CD8-positive, alpha-beta memory T cell (primary cell): ENCODE measurements at regions of chr16 and their contacts with region 1.

Region 1: GRCh38 chr16:23877107-23878090 is 41.6 kb downstream of the PRKCB start:
- DNase-seq: peak in 1 of 5 donors; percentile 28
- H3K4me3 ChIP-seq: no peak overlapping the region
- H3K4me3 Mint-ChIP-seq: peak overlapping the region in 1 of 7 donors; percentile 40
- H3K27ac ChIP-seq: no peak overlapping the region
- H3K27ac Mint-ChIP-seq: peak overlapping the region in 7 of 8 donors; percentile 50 to 80 (median 73)
- H3K4me1 ChIP-seq: peaks cover 54% of the 10 kb centered on the region
- H3K4me1 Mint-ChIP-seq: peaks cover 72 to 87% (median 82%) of the 10 kb centered on the region in 3 donors
- H3K27me3 ChIP-seq: no peaks in the 10 kb centered on the region
- H3K27me3 Mint-ChIP-seq: no peaks in the 10 kb centered on the region

Region 2: GRCh38 chr16:23770744-23771426 is 106.5 kb before region 1 on chr16:
- CTCF ChIA-PET with region 1: no interaction called
- POLR2A ChIA-PET with region 1: no interaction called
- DNase-seq: no peak
- H3K4me3 ChIP-seq: no peak overlapping the region
- H3K4me3 Mint-ChIP-seq: no peak overlapping the region
- H3K27ac ChIP-seq: no peak overlapping the region
- H3K27ac Mint-ChIP-seq: no peak overlapping the region
- H3K4me1 ChIP-seq: no peaks in the 10 kb centered on the region
- H3K4me1 Mint-ChIP-seq: no peaks in the 10 kb centered on the region
- H3K27me3 ChIP-seq: no peaks in the 10 kb centered on the region
- H3K27me3 Mint-ChIP-seq: peaks cover 7 to 19% of the 10 kb centered on the region in 2 donors

Region 3: DNA sequence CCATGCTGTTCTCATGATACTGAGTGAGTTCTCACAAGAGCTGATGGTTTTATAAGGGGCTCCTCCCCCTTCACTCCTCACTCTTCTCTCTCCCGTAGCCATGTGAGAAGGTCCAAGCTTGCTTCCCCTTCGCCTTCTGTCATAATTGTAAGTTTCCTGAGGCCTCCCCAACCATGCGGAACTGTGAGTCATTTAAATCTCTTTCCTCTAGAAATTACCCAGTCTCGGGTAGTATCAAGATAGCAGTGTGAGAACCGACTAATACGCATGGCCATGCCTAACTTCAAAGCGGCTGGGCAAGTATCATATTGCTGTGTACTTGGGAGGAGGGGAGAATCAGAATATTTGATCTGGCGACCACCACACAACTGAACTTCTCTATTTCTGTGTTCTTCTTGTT is 46.7 kb after region 1 on chr16:
- CTCF ChIA-PET with region 1: no interaction called
- POLR2A ChIA-PET with region 1: no interaction called
- DNase-seq: no peak
- H3K4me3 ChIP-seq: no peak overlapping the region
- H3K4me3 Mint-ChIP-seq: peak overlapping the region in 1 of 7 donors; percentile 18
- H3K27ac ChIP-seq: no peak overlapping the region
- H3K27ac Mint-ChIP-seq: peak overlapping the region in 3 of 8 donors; percentile 41 to 71 (median 54)
- H3K4me1 ChIP-seq: peaks cover 11% of the 10 kb centered on the region
- H3K4me1 Mint-ChIP-seq: peaks cover 59 to 90% (median 83%) of the 10 kb centered on the region in 3 donors
- H3K27me3 ChIP-seq: no peaks in the 10 kb centered on the region
- H3K27me3 Mint-ChIP-seq: no peaks in the 10 kb centered on the region

Region 4: DNA sequence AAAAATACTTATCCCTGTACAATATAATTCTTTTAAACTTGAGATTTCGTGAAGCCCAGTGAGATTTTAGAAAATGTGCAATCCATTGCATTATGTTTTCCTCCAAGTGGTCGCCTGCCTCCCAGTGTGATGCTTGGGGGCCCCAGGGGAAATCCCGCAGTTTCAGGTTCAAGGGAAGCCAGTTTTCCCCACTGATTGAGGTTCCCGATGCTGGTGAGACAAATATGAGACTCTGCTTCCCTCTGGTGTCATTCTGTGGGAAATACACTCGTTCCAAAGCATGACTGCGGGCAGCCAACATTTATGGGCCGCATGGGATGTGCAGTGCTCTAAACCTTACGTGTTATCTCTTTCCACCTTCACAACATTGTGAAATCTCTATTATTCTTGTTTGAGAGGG is 159.2 kb after region 1 on chr16:
- CTCF ChIA-PET with region 1: interaction called, 17 read pairs
- POLR2A ChIA-PET with region 1: no interaction called
- DNase-seq: peak in 4 of 5 donors; percentile 12 to 50 (median 30)
- H3K4me3 ChIP-seq: no peak overlapping the region
- H3K4me3 Mint-ChIP-seq: peak overlapping the region in 6 of 7 donors; percentile 43 to 96 (median 77)
- H3K27ac ChIP-seq: no peak overlapping the region
- H3K27ac Mint-ChIP-seq: peak overlapping the region in 6 of 8 donors; percentile 11 to 84 (median 62)
- H3K4me1 ChIP-seq: peaks cover 42% of the 10 kb centered on the region
- H3K4me1 Mint-ChIP-seq: peaks cover 48 to 66% (median 61%) of the 10 kb centered on the region in 3 donors
- H3K27me3 ChIP-seq: no peaks in the 10 kb centered on the region
- H3K27me3 Mint-ChIP-seq: no peaks in the 10 kb centered on the region